Aorta (tissue), 5 donors: ENCODE measurements at regions of chr1 and their contacts with region 1.

Region 1: GRCh38 chr1:8878448-8879347 is at the start of gene ENO1:
- DNase-seq: peak; percentile 98 to 99
- ATAC-seq: peak; percentile 97
- H3K4me3 ChIP-seq: peak within 1 kb of the TSS; percentile 80 to 85
- H3K27ac ChIP-seq: peak within 1 kb of the TSS; percentile 80 to 85
- H3K4me1 ChIP-seq: peaks cover 0 to 5% of the 10 kb centered on the region in 2 donors
- H3K27me3 ChIP-seq: no peaks in the 10 kb centered on the region
- total RNA-seq, gene ENO1: 542 to 688 TPM

Region 2: DNA sequence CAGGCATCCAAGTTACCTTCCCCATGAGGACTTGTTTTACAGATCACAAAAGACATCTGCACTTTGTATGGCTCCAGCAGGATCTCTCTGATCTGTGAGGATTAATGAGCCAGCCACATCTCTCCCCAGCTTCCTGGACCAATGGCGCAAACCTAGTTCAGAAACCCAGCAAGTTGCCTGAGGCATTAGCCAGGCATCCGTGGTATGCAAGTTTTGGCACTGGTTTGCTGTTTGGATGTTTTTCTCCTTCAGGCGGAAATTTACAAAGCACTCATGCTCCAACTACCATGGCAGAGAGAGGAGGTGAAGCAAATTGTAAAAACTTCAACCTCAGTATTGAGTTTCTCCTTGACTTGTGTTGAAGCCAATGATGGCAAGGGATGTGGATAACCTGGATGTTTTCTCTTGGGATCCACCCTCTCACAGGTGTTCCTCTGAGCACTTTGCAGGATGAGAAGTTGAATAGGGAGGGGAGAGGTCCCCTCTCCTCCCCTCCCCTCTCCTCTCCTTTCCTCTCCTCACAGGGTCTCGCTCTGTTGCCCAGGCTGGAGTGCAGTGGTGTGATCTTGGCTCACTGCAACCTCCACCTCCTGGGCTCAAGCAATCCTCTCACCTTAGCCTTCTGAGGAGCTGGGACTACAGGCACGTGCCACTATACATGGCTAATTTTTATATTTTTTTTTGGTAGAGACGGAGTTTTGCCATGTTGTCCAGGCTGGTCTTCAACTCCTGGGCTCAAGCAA is 25.4 kb after region 1 on chr1:
- intact Hi-C with region 1: loop called in 1 of 2 experiments (anchors 2 kb)
- DNase-seq: peak; percentile 78 to 84
- ATAC-seq: peak; percentile 68
- H3K4me3 ChIP-seq: no peak overlapping the region
- H3K27ac ChIP-seq: peak overlapping the region; percentile 57 to 98
- H3K4me1 ChIP-seq: no peaks in the 10 kb centered on the region
- H3K27me3 ChIP-seq: no peaks in the 10 kb centered on the region